B cell (primary cell): ENCODE measurements at regions of chr16 and their contacts with region 1.

Region 1: DNA sequence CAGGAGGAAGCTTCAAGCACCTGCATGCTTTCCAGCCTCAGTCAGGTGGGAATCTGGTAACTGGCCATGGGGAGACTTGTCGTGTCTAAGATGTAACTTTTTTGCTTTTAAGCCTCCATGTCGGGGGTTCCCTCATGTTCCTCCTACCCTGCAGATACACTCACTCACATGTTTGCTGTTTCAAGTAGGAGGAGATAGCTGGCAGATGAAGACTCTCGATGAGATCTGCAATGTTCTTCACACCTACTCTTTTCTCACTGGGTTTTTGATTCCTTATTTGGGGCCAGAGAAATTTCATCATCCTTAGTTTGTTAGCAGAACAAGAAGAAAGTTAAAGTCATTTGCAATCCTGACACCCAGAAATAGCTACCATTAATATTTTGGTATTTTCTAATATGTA is 24.7 kb downstream of the UTP4 start:
- DNase-seq: no peak
- ATAC-seq: no peak
- H3K4me3 ChIP-seq: no peak overlapping the region
- H3K4me3 Mint-ChIP-seq: no peak overlapping the region
- H3K27ac ChIP-seq: no peak overlapping the region
- H3K27ac Mint-ChIP-seq: no peak overlapping the region
- H3K4me1 ChIP-seq: no peaks in the 10 kb centered on the region
- H3K4me1 Mint-ChIP-seq: no peaks in the 10 kb centered on the region
- H3K27me3 ChIP-seq: no peaks in the 10 kb centered on the region
- H3K27me3 Mint-ChIP-seq: no peaks in the 10 kb centered on the region
- CTCF ChIP-seq: no peak

Region 2: GRCh38 chr16:69179328-69180010 is 22.3 kb after region 1 on chr16:
- CTCF ChIA-PET with region 1: no interaction called
- POLR2A ChIA-PET with region 1: no interaction called
- intact Hi-C with region 1: no loop called
- DNase-seq: no peak
- ATAC-seq: no peak
- H3K4me3 ChIP-seq: no peak overlapping the region
- H3K4me3 Mint-ChIP-seq: no peak overlapping the region
- H3K27ac ChIP-seq: no peak overlapping the region
- H3K27ac Mint-ChIP-seq: no peak overlapping the region
- H3K4me1 ChIP-seq: no peaks in the 10 kb centered on the region
- H3K4me1 Mint-ChIP-seq: no peaks in the 10 kb centered on the region
- H3K27me3 ChIP-seq: no peaks in the 10 kb centered on the region
- H3K27me3 Mint-ChIP-seq: no peaks in the 10 kb centered on the region
- CTCF ChIP-seq: no peak

Region 3: GRCh38 chr16:69225121-69225520 is 67.9 kb after region 1 on chr16:
- CTCF ChIA-PET with region 1: no interaction called
- POLR2A ChIA-PET with region 1: no interaction called
- intact Hi-C with region 1: no loop called
- DNase-seq: no peak
- ATAC-seq: no peak
- H3K4me3 ChIP-seq: no peak overlapping the region
- H3K4me3 Mint-ChIP-seq: no peak overlapping the region
- H3K27ac ChIP-seq: no peak overlapping the region
- H3K27ac Mint-ChIP-seq: no peak overlapping the region
- H3K4me1 ChIP-seq: no peaks in the 10 kb centered on the region
- H3K4me1 Mint-ChIP-seq: no peaks in the 10 kb centered on the region
- H3K27me3 ChIP-seq: no peaks in the 10 kb centered on the region
- H3K27me3 Mint-ChIP-seq: no peaks in the 10 kb centered on the region
- CTCF ChIP-seq: no peak

Region 4: GRCh38 chr16:69286941-69287713 is 129.9 kb after region 1 on chr16:
- CTCF ChIA-PET with region 1: interaction called, 314 read pairs
- POLR2A ChIA-PET with region 1: no interaction called
- intact Hi-C with region 1: no loop called
- DNase-seq: peak; percentile 75
- ATAC-seq: no peak
- H3K4me3 ChIP-seq: no peak overlapping the region
- H3K4me3 Mint-ChIP-seq: no peak overlapping the region
- H3K27ac ChIP-seq: no peak overlapping the region
- H3K27ac Mint-ChIP-seq: no peak overlapping the region
- H3K4me1 ChIP-seq: no peaks in the 10 kb centered on the region
- H3K4me1 Mint-ChIP-seq: peaks cover 1% of the 10 kb centered on the region
- H3K27me3 ChIP-seq: no peaks in the 10 kb centered on the region
- H3K27me3 Mint-ChIP-seq: no peaks in the 10 kb centered on the region
- CTCF ChIP-seq: peak; percentile 79